ENCODE measurements at regions of chr11 and their contacts with region 1.

Region 1: DNA sequence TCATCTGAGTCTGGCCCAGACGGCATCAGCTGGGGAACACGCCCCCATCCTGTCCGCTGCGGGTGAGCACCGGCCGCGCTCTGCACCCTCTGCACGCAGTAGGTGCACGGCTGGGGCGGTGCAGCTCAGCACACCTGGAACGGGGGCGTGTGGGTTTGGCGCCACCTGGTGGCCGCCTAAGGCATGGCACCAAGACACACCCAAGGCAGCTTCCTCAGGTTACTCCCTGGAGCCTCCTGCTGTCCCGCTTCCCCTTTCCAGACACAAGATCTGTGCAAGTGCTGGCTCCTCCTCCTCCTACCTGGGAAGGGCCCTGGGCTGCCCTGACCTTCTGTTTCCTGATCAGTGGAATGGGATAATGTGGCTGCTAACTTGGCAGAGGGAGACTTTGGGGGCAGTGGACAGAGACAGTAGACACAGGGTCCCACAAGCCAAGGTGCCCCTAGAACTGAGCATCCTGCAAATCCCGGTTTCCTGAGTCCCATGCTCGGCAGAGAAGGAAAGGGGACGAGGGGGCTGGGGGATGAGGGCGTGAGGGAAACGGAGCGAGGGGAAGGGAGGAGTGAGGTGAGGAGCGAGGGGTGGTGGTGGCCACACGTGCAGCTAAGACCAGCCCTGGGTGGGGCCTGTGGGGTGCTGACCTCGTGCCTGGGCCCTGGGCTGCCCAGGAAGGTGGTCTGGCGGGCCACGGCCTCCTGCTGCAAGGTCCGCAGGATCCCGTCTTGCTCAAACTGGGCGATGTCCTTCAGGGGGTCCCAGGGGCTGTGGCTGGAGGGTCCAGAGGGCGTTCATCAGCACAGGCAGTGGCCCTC is 34.8 kb upstream of the CARS1 start:
- DNase-seq: peak; percentile 84
- ATAC-seq: peak; percentile 84
- H3K4me3 ChIP-seq: no peak overlapping the region
- H3K27ac ChIP-seq: no peak overlapping the region
- H3K4me1 ChIP-seq: no peaks in the 10 kb centered on the region
- H3K27me3 ChIP-seq: no peaks in the 10 kb centered on the region
- CTCF ChIP-seq: peak; percentile 99

Region 2: DNA sequence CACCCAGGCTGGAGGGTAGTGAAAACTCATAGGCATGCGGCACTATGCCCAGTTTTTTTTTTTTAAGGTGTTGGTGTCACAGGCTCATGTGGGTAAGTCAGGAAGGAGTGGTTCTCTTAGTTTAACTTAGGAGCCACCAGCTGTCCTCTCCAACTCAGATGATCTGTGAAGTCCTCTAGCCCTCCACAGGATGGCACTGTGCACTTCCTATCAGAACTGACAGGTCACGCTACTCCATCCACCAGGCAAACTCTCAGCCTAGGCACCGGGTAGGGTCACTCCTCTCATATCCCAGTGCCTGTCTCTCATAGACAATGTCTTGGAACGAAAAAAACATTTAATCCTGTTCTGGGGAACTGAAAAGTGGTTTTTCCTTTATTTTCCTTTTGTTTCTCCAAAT is 116.4 kb before region 1 on chr11:
- intact Hi-C with region 1: no loop called
- DNase-seq: no peak
- ATAC-seq: peak; percentile 75
- H3K4me3 ChIP-seq: no peak overlapping the region
- H3K27ac ChIP-seq: no peak overlapping the region
- H3K4me1 ChIP-seq: no peaks in the 10 kb centered on the region
- H3K27me3 ChIP-seq: no peaks in the 10 kb centered on the region
- CTCF ChIP-seq: peak; percentile 40

Region 3: DNA sequence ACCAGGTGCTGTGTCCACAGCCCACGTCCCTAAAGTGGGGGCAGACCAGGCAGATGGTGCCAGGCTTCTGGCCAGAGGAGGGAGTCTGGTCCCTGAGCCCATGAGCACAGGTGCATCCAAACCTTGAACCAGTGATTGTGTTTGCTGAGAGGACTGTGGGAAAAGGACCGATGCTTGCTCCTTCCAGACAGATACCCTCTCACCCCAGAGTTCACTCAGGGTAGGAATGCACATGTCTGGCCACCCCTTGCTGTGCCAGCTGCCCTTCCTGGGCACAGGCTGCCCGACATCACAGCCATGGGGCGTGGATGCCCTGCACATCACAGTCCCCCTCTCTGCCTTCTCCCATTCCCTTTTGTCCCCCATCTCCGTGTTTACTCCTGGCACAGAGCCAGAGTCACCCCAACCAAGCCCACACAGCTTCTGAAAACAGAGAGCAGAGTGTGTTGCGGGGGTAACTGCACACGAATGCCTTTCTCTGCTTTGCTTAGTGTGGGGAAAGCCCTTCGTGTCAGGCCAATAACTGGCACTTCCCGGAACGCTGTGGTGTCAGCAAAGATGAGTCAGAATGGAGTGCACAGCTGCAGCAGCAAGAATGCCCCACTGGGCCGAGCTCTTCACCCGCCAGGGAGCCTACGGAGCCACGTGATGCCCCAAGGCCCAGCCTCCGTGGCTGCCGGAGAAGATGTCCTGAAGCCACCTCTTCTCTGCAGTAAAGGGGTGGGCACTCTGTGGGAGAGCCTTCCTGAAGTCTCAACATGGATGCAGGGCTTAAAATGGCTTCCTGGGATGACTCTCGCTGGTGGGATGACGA is 42.4 kb before region 1 on chr11:
- intact Hi-C with region 1: loop called (anchors 10 kb)
- DNase-seq: peak; percentile 77
- ATAC-seq: peak; percentile 87
- H3K4me3 ChIP-seq: no peak overlapping the region
- H3K27ac ChIP-seq: peak overlapping the region; percentile 40
- H3K4me1 ChIP-seq: peaks cover 14% of the 10 kb centered on the region
- H3K27me3 ChIP-seq: no peaks in the 10 kb centered on the region
- CTCF ChIP-seq: peak; percentile 32